ENCODE measurements at regions of chr1 and their contacts with region 1.

Region 1: GRCh38 chr1:180863158-180863775 is 49.4 kb upstream of the KIAA1614 start:
- DNase-seq: peak in 1 of 6 donors; percentile 45
- ATAC-seq: peak; percentile 74 to 85 (median 83)
- H3K4me3 ChIP-seq: no peak overlapping the region
- H3K27ac ChIP-seq: no peak overlapping the region
- H3K4me1 ChIP-seq: peaks cover 12 to 21% (median 20%) of the 10 kb centered on the region in 3 donors
- H3K27me3 ChIP-seq: no peaks in the 10 kb centered on the region
- CTCF ChIP-seq: peak; percentile 32 to 64 (median 42)

Region 2: GRCh38 chr1:180521474-180522207 is 341.6 kb before region 1 on chr1:
- intact Hi-C with region 1: loop called in 2 of 3 experiments (anchors 5 to 10 kb)
- DNase-seq: no peak
- ATAC-seq: peak; percentile 75 to 80 (median 76)
- H3K4me3 ChIP-seq: no peak overlapping the region
- H3K27ac ChIP-seq: peak overlapping the region in 2 of 4 donors; percentile 20 to 56
- H3K4me1 ChIP-seq: peaks cover 3 to 17% (median 16%) of the 10 kb centered on the region in 3 donors
- H3K27me3 ChIP-seq: no peaks in the 10 kb centered on the region
- CTCF ChIP-seq: no peak

Region 3: DNA sequence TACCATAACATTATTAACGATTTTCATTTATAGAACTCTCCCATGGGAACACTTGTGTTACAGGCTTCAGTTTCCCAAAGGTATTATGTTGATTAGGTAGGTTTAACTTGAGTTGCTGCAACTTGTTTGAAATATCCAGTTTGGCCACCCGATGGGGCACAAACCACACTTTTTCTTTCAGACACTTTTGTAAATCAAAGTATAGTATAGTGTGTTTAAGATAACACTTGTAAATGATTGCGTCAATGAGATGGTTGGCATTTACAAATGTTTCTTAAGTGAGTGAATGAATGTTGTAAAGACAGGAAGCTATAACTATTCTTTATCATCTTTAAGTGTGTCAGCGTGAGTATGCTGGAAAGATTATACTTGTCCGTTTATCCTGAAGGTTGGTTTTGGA is 227.1 kb before region 1 on chr1:
- intact Hi-C with region 1: loop called in 1 of 3 experiments (anchors 5 kb)
- DNase-seq: peak in 1 of 6 donors; percentile 46
- ATAC-seq: peak in 1 of 4 donors; percentile 11
- H3K4me3 ChIP-seq: no peak overlapping the region
- H3K27ac ChIP-seq: no peak overlapping the region
- H3K4me1 ChIP-seq: peaks cover 5 to 63% (median 55%) of the 10 kb centered on the region in 3 donors
- H3K27me3 ChIP-seq: no peaks in the 10 kb centered on the region
- CTCF ChIP-seq: no peak

Measured in pancreas (tissue), 10 donors.